Activated T-helper 1 cell treated with anti-CD3 and anti-CD28 coated beads, Interleukin-12 subunit alpha, Interleukin-12 subunit beta, Interleukin-2, Interleukin-4 antibody, amounts not matched to agents 30 ng/mL and 10 ng/mL and 1 ng/mL, durations not matched to agents 14 hours and 24 hours and 36 hours (primary cell): ENCODE measurements at regions of chr17 and their contacts with region 1.

Region 1: DNA sequence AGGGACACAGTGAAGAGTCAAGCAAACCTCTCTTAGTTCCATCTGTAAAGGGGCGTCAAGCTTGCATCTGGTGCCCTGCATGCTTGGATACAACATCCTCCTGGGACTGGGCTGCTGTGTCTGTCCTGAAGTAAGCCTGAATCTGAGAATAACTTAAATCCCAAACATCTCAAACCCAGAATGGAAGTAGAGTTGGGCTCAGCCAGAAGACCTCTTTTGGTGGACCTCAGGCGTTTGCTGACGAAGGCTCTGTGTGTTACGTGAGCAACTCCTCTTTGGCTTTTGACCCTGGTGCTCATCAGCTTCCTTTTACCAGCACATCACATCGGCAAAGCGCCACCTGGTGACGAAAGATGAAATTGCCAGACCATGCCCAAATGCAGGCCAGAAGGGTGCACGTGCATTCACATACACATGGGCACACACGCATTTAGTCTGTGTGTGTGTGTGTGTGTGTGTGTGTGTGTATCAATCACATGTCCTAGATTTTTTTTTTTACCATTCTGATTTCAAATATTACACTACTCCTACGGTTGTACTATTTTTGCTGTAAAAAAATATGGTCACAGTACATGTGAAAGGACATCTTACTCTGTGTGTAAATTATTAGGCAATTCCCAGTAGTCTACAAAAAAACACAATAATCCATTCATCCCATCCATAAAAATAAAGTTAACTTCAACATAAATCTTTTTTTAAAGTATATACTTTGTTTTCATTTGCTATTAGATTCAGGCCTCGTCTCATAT is 41.1 kb upstream of the FOXJ1 start:
- DNase-seq: peak; percentile 90
- H3K4me3 Mint-ChIP-seq: peak overlapping the region; percentile 53
- H3K27ac Mint-ChIP-seq: peak overlapping the region; percentile 87
- H3K4me1 Mint-ChIP-seq: peaks cover 64% of the 10 kb centered on the region
- H3K27me3 Mint-ChIP-seq: no peaks in the 10 kb centered on the region

Region 2: DNA sequence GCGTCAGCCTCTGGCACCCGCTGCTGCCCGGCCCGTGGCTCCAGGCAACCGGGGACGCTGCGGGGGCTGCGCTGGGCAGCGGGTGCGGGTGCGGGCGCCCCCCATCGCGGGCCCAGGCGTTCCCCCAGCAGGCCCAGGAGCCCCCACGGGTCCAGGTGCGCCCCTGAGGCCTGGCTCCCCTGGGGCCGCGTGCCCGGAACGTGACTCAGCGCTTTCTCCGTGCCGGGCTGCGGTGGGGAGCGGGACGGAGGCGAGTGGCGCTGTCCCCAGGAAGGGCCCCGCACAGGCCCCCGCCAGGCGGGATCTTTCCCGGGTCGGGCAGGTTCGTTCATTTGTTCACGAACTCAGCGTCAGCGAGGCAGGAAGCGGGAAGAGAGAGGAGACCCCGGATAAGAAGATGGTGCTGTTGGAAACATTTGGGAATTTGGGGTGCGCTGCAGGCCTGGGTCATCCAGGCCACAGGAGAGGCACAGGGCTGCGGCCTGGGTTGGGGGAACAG is 60.2 kb before region 1 on chr17:
- intact Hi-C with region 1: loop called (anchors 1 kb)
- DNase-seq: no peak
- H3K4me3 Mint-ChIP-seq: peak overlapping the region; percentile 39
- H3K27ac Mint-ChIP-seq: no peak overlapping the region
- H3K4me1 Mint-ChIP-seq: peaks cover 17% of the 10 kb centered on the region
- H3K27me3 Mint-ChIP-seq: peaks cover 5% of the 10 kb centered on the region

Region 3: GRCh38 chr17:76141212-76142038 is 40.8 kb before region 1 on chr17 and contains the start of gene FOXJ1:
- intact Hi-C with region 1: loop called (anchors 1 kb)
- DNase-seq: peak; percentile 91
- H3K4me3 Mint-ChIP-seq: peak within 1 kb of the TSS; percentile 74
- H3K27ac Mint-ChIP-seq: peak within 1 kb of the TSS; percentile 65
- H3K4me1 Mint-ChIP-seq: peaks cover 53% of the 10 kb centered on the region
- H3K27me3 Mint-ChIP-seq: peaks cover 14% of the 10 kb centered on the region
- total RNA-seq, gene FOXJ1: 0.10 TPM in 1 of 2 replicates, not detected in the other

Region 4: GRCh38 chr17:76345377-76345974 is 163.3 kb after region 1 on chr17:
- intact Hi-C with region 1: no loop called
- DNase-seq: no peak
- H3K4me3 Mint-ChIP-seq: no peak overlapping the region
- H3K27ac Mint-ChIP-seq: no peak overlapping the region
- H3K4me1 Mint-ChIP-seq: no peaks in the 10 kb centered on the region
- H3K27me3 Mint-ChIP-seq: no peaks in the 10 kb centered on the region